Calu3 (cell line): ENCODE measurements at regions of chr2 and their contacts with region 1.

Region 1: DNA sequence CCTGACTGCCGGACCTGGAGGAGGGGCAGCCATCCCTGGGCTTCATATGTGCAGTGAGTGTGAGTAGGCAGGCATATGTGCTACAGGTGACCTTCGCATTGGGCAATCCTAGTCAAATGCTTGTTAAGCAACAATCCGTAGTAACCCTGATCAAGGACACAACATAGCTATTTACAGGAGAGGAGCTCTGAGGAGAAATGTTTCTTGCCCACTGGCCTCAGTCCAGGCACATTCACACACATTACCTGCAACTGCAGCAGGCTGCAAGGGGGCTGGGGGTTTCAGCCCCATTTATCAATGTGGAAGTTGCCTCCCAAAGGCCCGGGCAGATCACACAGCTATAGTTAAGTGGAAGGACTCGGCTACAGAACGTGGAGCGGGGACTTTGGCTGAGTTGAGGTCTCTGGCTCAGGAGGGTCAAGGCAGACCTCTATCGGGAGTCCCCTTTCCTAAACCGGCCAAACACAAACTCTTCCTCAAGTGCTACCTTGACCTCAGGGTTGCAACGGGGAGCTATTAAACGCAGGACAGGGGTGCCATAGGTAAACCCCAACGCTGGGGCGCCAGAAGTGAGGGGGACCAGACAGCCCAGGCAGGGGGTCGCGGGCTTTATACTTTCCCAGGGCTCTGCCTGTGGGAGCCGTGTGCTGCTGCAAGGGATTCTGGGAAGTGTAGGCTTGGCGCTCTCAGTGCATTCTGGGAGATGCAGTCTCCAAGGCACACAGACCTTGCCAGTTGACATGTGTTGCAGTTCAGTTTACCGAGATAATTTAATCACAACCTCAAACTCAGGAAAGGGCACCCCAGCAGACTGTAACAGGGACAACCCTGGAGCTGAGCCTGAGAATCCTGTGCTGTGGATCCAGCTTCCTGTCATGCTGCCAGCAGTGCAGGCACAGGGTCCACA is 9.4 kb downstream of the KHK start:
- DNase-seq: peak; percentile 49
- H3K4me3 Mint-ChIP-seq: no peak overlapping the region
- H3K27ac Mint-ChIP-seq: no peak overlapping the region
- H3K4me1 Mint-ChIP-seq: peaks cover 12% of the 10 kb centered on the region
- H3K27me3 Mint-ChIP-seq: no peaks in the 10 kb centered on the region
- CTCF ChIP-seq: no peak

Region 2: GRCh38 chr2:27123302-27124231 is 27.6 kb after region 1 on chr2 and contains the start of gene ABHD1:
- CTCF ChIA-PET with region 1: no interaction called
- intact Hi-C with region 1: no loop called
- DNase-seq: peak; percentile 57
- H3K4me3 Mint-ChIP-seq: peak within 1 kb of the TSS; percentile 77
- H3K27ac Mint-ChIP-seq: no peak within 1 kb of the TSS
- H3K4me1 Mint-ChIP-seq: peaks cover 8% of the 10 kb centered on the region
- H3K27me3 Mint-ChIP-seq: peaks cover 50% of the 10 kb centered on the region
- CTCF ChIP-seq: no peak
- total RNA-seq, gene ABHD1: 0.56 and 0.64 TPM in 2 replicates

Region 3: DNA sequence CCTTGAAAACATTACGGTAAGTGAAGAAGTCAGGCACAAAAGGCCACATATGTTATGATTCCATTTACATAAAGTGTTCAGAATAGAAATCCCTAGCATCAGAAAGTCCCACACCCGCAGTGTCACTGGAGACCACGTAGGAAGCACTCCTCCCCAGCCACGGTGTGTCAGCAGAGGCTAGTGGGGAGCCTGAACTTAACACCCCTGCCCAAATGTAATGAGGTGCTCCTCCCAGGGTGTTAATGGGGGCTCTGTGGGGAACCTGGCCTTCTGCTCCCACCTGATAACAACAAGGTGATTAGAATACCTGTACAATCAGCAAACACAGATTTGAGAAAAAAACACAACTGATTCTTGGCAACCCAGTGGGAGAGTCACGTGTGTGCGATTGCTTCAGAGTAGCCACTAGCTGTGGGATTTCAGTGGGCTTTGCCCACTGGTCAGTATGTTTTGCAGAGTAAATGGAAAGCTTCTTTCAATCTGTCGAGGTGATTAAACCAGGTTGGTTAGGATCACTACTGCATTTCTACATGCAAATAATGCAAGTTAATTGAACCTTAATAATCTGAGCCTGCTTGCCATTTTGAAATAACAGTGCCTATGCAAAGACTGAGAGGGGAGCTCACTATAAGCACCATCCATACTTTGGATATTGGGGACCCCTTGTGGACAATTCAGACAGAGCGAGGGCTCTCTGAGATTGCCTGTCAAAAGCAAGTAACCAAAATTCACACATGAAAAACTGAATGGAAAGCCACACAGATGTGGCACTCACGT is 95.2 kb after region 1 on chr2:
- CTCF ChIA-PET with region 1: interaction called, 11 read pairs
- intact Hi-C with region 1: loop called (anchors 1 kb)
- DNase-seq: peak; percentile 59
- H3K4me3 Mint-ChIP-seq: no peak overlapping the region
- H3K27ac Mint-ChIP-seq: no peak overlapping the region
- H3K4me1 Mint-ChIP-seq: peaks cover 8% of the 10 kb centered on the region
- H3K27me3 Mint-ChIP-seq: peaks cover 14% of the 10 kb centered on the region
- CTCF ChIP-seq: peak; percentile 50

Region 4: DNA sequence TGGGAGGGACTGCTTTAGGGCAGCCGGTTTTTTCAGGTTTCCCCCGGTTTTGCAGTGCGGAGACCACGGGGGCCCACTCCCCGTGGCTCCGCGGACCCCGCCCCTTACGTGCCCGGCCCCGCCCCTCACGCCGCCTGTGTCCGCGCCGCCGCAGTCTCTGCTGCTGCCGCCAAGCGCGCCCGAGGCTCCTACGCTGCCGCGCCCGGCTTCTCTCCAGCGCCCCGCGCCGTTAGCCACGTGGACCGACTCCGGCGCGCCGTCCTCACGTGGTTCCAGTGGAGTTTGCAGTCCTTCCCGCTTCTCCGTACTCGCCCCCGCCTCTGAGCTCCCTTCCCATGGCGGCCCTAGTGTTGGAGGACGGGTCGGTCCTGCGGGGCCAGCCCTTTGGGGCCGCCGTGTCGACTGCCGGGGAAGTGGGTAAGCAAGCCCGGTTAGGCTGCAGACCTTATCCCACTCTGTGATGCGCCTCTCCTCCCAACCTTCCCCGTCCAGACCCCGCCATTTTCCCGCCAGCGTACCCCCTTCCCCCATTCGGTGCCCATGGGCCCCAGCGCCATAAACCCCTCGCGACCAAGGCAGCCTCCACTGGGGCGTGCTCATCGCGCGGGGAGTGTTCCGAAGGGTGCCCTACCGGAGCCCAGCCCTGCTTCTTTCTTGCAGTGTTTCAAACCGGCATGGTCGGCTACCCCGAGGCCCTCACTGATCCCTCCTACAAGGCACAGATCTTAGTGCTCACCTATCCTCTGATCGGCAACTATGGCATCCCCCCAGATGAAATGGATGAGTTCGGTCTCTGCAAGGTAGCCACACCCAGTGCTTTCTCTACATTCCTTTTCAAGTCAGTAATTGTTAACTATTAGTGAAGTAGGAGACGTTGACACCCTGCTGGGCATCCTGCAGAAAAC is 121.5 kb after region 1 on chr2 and contains the start of gene CAD:
- CTCF ChIA-PET with region 1: no interaction called
- intact Hi-C with region 1: loop called (anchors 1 kb)
- DNase-seq: peak; percentile 90
- H3K4me3 Mint-ChIP-seq: peak within 1 kb of the TSS; percentile 88
- H3K27ac Mint-ChIP-seq: peak within 1 kb of the TSS; percentile 82
- H3K4me1 Mint-ChIP-seq: peaks cover 38% of the 10 kb centered on the region
- H3K27me3 Mint-ChIP-seq: no peaks in the 10 kb centered on the region
- CTCF ChIP-seq: no peak
- total RNA-seq, gene CAD: 68.2 and 71.6 TPM in 2 replicates

Region 5: DNA sequence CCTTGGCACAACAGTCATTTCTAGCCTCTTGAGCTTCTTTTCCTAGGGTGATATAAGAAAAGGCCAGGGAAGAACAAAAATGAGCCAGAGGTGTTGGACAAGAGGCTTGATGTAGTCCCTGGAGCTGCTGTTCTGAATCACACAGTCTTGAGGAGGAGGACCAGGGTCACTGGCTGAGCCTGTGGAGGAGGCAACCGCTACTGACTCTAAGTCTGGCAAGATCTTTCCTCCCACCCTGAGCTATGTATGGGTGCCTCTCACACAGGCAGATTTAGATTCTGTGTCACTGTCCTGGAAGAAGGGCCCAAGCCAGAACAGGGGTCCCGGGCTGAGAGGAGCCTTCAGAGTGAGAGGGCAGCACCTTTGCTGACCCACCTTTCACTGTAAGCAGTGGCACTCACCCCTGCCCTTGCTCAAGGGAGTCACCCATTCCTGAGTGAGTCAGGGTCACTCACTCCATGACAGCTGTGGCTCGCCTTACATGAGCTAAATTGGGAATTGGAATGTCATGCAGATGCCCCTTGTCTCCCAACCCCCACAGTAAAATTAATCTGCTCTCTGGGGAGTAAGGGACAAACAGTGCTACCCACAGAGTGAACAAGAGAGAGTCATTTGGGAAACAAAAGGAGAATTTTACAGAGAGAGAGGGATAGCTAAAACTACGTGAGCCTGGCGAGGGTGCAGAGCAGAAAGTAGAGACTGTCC is 186.0 kb after region 1 on chr2 and contains the start of gene TRIM54:
- CTCF ChIA-PET with region 1: interaction called, 11 read pairs
- intact Hi-C with region 1: loop called (anchors 1 kb)
- DNase-seq: no peak
- H3K4me3 Mint-ChIP-seq: no peak within 1 kb of the TSS
- H3K27ac Mint-ChIP-seq: no peak within 1 kb of the TSS
- H3K4me1 Mint-ChIP-seq: peaks cover 27% of the 10 kb centered on the region
- H3K27me3 Mint-ChIP-seq: peaks cover 82% of the 10 kb centered on the region
- CTCF ChIP-seq: no peak
- total RNA-seq, gene TRIM54: 0.99 and 2.3 TPM in 2 replicates

Region 6: DNA sequence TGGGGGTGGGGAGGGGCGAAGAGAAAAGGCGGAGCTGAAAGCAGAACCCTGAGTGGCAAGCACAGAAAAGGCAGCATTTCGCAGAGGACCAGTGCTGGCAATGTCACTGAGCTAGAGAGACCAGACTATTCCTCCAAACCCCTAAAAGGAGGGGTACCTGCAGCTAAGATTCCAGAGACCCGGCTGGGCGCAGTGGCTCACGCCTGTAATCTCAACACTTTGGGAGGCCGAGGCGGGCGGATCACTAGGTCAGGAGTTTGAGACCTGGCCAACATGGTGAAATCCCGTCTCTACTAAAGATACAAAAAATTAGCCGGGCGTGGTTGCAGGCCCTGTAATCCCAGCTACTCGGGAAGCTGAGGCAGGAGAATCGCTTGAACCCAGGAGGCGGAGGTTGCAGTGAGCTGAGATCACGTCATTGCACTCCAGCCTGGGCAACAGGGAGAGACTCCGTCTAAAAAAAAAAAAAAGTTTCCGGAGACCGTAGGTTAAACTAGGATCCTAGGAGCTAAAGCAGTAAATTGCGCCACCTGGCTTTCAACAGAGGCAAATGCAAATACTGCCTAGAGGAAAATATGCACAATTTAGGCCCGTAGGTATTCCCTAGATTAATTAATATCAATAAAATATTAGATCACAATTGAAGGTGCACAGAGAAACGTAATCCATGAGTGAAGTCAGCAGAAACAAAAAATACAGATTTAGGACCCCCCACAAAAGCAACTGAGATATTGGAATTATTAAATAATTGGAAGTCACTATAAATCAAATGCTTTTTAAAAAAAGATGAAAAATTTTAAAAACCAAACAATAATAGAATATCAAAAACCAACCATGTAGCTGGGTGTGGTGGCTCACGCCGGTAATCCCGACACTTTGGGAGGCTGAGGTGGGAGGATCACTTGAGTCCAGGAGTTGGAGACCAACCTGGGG is 207.4 kb after region 1 on chr2:
- CTCF ChIA-PET with region 1: no interaction called
- intact Hi-C with region 1: loop called (anchors 2 kb)
- DNase-seq: peak; percentile 59
- H3K4me3 Mint-ChIP-seq: peak overlapping the region; percentile 40
- H3K27ac Mint-ChIP-seq: no peak overlapping the region
- H3K4me1 Mint-ChIP-seq: no peaks in the 10 kb centered on the region
- H3K27me3 Mint-ChIP-seq: peaks cover 31% of the 10 kb centered on the region
- CTCF ChIP-seq: peak; percentile 80